ENCODE measurements at regions of chr10 and their contacts with region 1.

Region 1: DNA sequence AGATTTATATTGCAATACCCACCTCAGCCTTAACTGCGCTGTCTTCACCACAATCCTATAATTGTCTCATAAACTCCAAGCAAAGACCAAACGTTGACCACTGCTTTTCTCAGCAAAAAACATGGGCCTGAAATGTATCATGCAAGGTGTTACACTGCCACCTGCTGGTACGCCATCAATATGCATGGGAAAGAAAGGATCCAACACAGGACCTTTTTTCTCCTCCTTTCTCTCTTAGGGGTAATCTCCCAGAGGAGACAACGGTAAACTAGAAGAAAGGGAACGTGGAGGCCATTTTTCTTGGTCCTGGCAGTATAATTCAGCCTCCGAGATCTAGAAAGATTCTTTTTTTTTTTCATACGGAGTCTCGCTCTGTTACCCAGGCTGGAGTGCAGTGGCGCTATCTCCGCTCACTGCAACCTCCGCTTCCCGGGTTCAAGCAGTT is 79.1 kb upstream of the MPP7 start:
- DNase-seq: peak; percentile 95
- ATAC-seq: peak; percentile 95
- H3K4me3 Mint-ChIP-seq: no peak overlapping the region
- H3K27ac Mint-ChIP-seq: no peak overlapping the region
- H3K4me1 Mint-ChIP-seq: peaks cover 28% of the 10 kb centered on the region
- H3K27me3 Mint-ChIP-seq: no peaks in the 10 kb centered on the region
- CTCF ChIP-seq: peak; percentile 92

Region 2: DNA sequence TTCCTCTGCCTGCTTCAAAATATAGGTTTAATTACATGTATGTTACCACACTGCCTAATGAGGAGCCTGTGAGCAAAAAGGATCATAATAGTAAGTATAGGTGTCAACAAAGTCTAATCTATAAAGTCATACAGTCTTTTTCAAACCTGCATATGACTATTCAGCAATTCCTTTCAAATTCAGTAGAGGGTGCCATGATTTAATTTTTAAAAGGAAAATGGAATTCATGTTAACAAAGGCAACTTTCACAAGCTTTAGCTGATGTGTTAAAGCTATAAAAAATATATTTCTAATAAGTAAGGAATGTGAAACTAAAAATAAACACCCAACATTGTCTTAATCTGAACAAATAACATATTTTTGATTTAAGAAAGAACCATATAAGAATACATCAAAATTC is 131.1 kb before region 1 on chr10:
- CTCF ChIA-PET with region 1: interaction called, 202 read pairs
- POLR2A ChIA-PET with region 1: interaction called, 3 read pairs
- intact Hi-C with region 1: loop called (anchors 2 kb)
- DNase-seq: no peak
- ATAC-seq: no peak
- H3K4me3 Mint-ChIP-seq: no peak overlapping the region
- H3K27ac Mint-ChIP-seq: no peak overlapping the region
- H3K4me1 Mint-ChIP-seq: peaks cover 34% of the 10 kb centered on the region
- H3K27me3 Mint-ChIP-seq: no peaks in the 10 kb centered on the region
- CTCF ChIP-seq: peak; percentile 62

Region 3: DNA sequence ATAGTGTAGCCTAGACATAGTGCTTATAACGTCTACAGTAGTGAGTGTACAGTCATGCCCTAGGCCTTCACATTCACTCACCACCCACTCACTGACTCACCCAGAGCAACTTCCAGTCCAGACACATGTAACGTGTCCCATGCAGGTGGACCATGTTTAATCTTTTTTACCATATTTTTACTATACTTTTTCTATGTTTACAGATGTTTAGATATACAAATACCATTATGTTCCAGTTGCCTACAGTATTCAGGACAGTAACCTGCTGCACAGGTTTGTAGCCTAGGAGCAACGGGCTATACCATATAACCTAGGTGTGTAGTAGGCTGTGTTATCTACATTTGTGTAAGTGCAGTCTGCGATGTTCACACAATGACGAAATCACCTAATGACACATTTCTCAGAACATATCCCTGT is 90.0 kb before region 1 on chr10:
- CTCF ChIA-PET with region 1: interaction called, 166 read pairs
- POLR2A ChIA-PET with region 1: interaction called, 3 read pairs
- intact Hi-C with region 1: no loop called
- DNase-seq: peak; percentile 82
- ATAC-seq: peak; percentile 99
- H3K4me3 Mint-ChIP-seq: no peak overlapping the region
- H3K27ac Mint-ChIP-seq: peak overlapping the region; percentile 75
- H3K4me1 Mint-ChIP-seq: peaks cover 56% of the 10 kb centered on the region
- H3K27me3 Mint-ChIP-seq: no peaks in the 10 kb centered on the region
- CTCF ChIP-seq: no peak

Region 4: DNA sequence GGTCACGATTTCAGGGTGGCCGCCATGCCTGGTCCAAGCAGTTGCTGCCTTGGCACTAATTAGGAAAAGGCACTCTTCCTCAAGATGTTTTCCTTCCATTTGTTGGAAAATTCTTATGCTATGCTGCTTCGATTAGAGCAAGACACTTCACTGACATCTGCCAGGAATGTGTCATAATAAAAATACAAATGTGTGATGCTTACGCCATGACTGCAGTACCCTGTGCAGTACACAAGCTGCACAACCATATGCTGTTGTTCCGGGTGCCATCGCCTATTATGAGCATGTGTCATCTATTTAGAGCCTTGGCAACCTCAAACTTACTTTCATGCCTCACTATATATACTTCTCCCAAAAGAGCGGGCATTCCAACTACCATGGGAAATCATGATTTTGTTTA is 64.2 kb before region 1 on chr10:
- CTCF ChIA-PET with region 1: interaction called, 36 read pairs
- POLR2A ChIA-PET with region 1: no interaction called
- intact Hi-C with region 1: no loop called
- DNase-seq: no peak
- ATAC-seq: no peak
- H3K4me3 Mint-ChIP-seq: no peak overlapping the region
- H3K27ac Mint-ChIP-seq: no peak overlapping the region
- H3K4me1 Mint-ChIP-seq: peaks cover 31% of the 10 kb centered on the region
- H3K27me3 Mint-ChIP-seq: no peaks in the 10 kb centered on the region
- CTCF ChIP-seq: no peak

Region 5: GRCh38 chr10:28393966-28394568 is 12.1 kb after region 1 on chr10:
- CTCF ChIA-PET with region 1: interaction called, 61 read pairs
- POLR2A ChIA-PET with region 1: no interaction called
- intact Hi-C with region 1: no loop called
- DNase-seq: peak; percentile 80
- ATAC-seq: peak; percentile 89
- H3K4me3 Mint-ChIP-seq: no peak overlapping the region
- H3K27ac Mint-ChIP-seq: no peak overlapping the region
- H3K4me1 Mint-ChIP-seq: peaks cover 4% of the 10 kb centered on the region
- H3K27me3 Mint-ChIP-seq: peaks cover 2% of the 10 kb centered on the region
- CTCF ChIP-seq: peak; percentile 94